Naive thymus-derived CD4-positive, alpha-beta T cell (primary cell): ENCODE measurements at regions of chr3 and their contacts with region 1.

Region 1: GRCh38 chr3:186930641-186931531 is 560 bp downstream of the ST6GAL1 start:
- DNase-seq: peak; percentile 39 to 78 (median 75)
- ATAC-seq: peak; percentile 87
- H3K4me3 ChIP-seq: peak overlapping the region; percentile 79
- H3K4me3 Mint-ChIP-seq: peak overlapping the region; percentile 89 to 100 (median 98)
- H3K27ac ChIP-seq: peak overlapping the region; percentile 74
- H3K27ac Mint-ChIP-seq: peak overlapping the region; percentile 88 to 98 (median 95)
- H3K4me1 ChIP-seq: peaks cover 8 to 20% of the 10 kb centered on the region in 2 donors
- H3K4me1 Mint-ChIP-seq: peaks cover 30 to 47% (median 40%) of the 10 kb centered on the region in 7 donors
- H3K27me3 ChIP-seq: no peaks in the 10 kb centered on the region
- H3K27me3 Mint-ChIP-seq: no peaks in the 10 kb centered on the region

Region 2: GRCh38 chr3:184981071-184981470 is 1949.8 kb before region 1 on chr3:
- CTCF ChIA-PET with region 1: no interaction called
- POLR2A ChIA-PET with region 1: no interaction called
- intact Hi-C with region 1: no loop called
- DNase-seq: no peak
- ATAC-seq: no peak
- H3K4me3 ChIP-seq: no peak overlapping the region
- H3K4me3 Mint-ChIP-seq: no peak overlapping the region
- H3K27ac ChIP-seq: no peak overlapping the region
- H3K27ac Mint-ChIP-seq: no peak overlapping the region
- H3K4me1 ChIP-seq: no peaks in the 10 kb centered on the region
- H3K4me1 Mint-ChIP-seq: peaks cover 0 to 21% (median 10%) of the 10 kb centered on the region in 7 donors
- H3K27me3 ChIP-seq: no peaks in the 10 kb centered on the region
- H3K27me3 Mint-ChIP-seq: no peaks in the 10 kb centered on the region

Region 3: GRCh38 chr3:186342197-186342596 is 588.7 kb before region 1 on chr3:
- CTCF ChIA-PET with region 1: no interaction called
- POLR2A ChIA-PET with region 1: no interaction called
- intact Hi-C with region 1: no loop called
- DNase-seq: no peak
- ATAC-seq: peak; percentile 67
- H3K4me3 ChIP-seq: no peak overlapping the region
- H3K4me3 Mint-ChIP-seq: no peak overlapping the region
- H3K27ac ChIP-seq: no peak overlapping the region
- H3K27ac Mint-ChIP-seq: no peak overlapping the region
- H3K4me1 ChIP-seq: no peaks in the 10 kb centered on the region
- H3K4me1 Mint-ChIP-seq: peaks cover 0 to 13% (median 11%) of the 10 kb centered on the region in 7 donors
- H3K27me3 ChIP-seq: no peaks in the 10 kb centered on the region
- H3K27me3 Mint-ChIP-seq: peaks cover 0 to 15% (median 7%) of the 10 kb centered on the region in 5 donors

Region 4: GRCh38 chr3:186806089-186807055 is 124.5 kb before region 1 on chr3 and contains the start of gene RFC4:
- CTCF ChIA-PET with region 1: interaction called, 3 read pairs
- POLR2A ChIA-PET with region 1: no interaction called
- intact Hi-C with region 1: loop called in 1 of 2 experiments (anchors 1 kb)
- DNase-seq: peak; percentile 66 to 86 (median 82)
- ATAC-seq: peak; percentile 91
- H3K4me3 ChIP-seq: peak within 1 kb of the TSS; percentile 95
- H3K4me3 Mint-ChIP-seq: peak within 1 kb of the TSS; percentile 89 to 97 (median 94)
- H3K27ac ChIP-seq: peak within 1 kb of the TSS; percentile 86
- H3K27ac Mint-ChIP-seq: peak within 1 kb of the TSS; percentile 84 to 97 (median 95)
- H3K4me1 ChIP-seq: peaks cover 17 to 21% of the 10 kb centered on the region in 2 donors
- H3K4me1 Mint-ChIP-seq: peaks cover 5 to 38% (median 18%) of the 10 kb centered on the region in 7 donors
- H3K27me3 ChIP-seq: no peaks in the 10 kb centered on the region
- H3K27me3 Mint-ChIP-seq: no peaks in the 10 kb centered on the region
- total RNA-seq, gene RFC4: 8.7 to 71.6 (median 22.1) TPM

Region 5: GRCh38 chr3:186901135-186901734 is 29.7 kb before region 1 on chr3:
- CTCF ChIA-PET with region 1: interaction called, 3 read pairs
- POLR2A ChIA-PET with region 1: interaction called, 74 read pairs
- intact Hi-C with region 1: loop called in 1 of 2 experiments (anchors 5 kb)
- DNase-seq: peak in 4 of 9 donors; percentile 17 to 33 (median 30)
- ATAC-seq: peak; percentile 36
- H3K4me3 ChIP-seq: no peak overlapping the region
- H3K4me3 Mint-ChIP-seq: peak overlapping the region in 7 of 10 donors; percentile 6 to 61 (median 34)
- H3K27ac ChIP-seq: no peak overlapping the region
- H3K27ac Mint-ChIP-seq: peak overlapping the region; percentile 69 to 91 (median 83)
- H3K4me1 ChIP-seq: peaks cover 8 to 11% of the 10 kb centered on the region in 2 donors
- H3K4me1 Mint-ChIP-seq: peaks cover 5 to 39% (median 25%) of the 10 kb centered on the region in 7 donors
- H3K27me3 ChIP-seq: no peaks in the 10 kb centered on the region
- H3K27me3 Mint-ChIP-seq: no peaks in the 10 kb centered on the region

Region 6: GRCh38 chr3:187006864-187007630 is 76.2 kb after region 1 on chr3:
- CTCF ChIA-PET with region 1: no interaction called
- POLR2A ChIA-PET with region 1: interaction called, 5 read pairs
- intact Hi-C with region 1: loop called (anchors 2 kb)
- DNase-seq: peak in 4 of 9 donors; percentile 43 to 62 (median 52)
- ATAC-seq: peak; percentile 70
- H3K4me3 ChIP-seq: no peak overlapping the region
- H3K4me3 Mint-ChIP-seq: peak overlapping the region in 9 of 10 donors; percentile 10 to 79 (median 60)
- H3K27ac ChIP-seq: no peak overlapping the region
- H3K27ac Mint-ChIP-seq: peak overlapping the region; percentile 5 to 89 (median 61)
- H3K4me1 ChIP-seq: peaks cover 31 to 32% of the 10 kb centered on the region in 2 donors
- H3K4me1 Mint-ChIP-seq: peaks cover 48 to 80% (median 66%) of the 10 kb centered on the region in 7 donors
- H3K27me3 ChIP-seq: no peaks in the 10 kb centered on the region
- H3K27me3 Mint-ChIP-seq: no peaks in the 10 kb centered on the region

Region 7: DNA sequence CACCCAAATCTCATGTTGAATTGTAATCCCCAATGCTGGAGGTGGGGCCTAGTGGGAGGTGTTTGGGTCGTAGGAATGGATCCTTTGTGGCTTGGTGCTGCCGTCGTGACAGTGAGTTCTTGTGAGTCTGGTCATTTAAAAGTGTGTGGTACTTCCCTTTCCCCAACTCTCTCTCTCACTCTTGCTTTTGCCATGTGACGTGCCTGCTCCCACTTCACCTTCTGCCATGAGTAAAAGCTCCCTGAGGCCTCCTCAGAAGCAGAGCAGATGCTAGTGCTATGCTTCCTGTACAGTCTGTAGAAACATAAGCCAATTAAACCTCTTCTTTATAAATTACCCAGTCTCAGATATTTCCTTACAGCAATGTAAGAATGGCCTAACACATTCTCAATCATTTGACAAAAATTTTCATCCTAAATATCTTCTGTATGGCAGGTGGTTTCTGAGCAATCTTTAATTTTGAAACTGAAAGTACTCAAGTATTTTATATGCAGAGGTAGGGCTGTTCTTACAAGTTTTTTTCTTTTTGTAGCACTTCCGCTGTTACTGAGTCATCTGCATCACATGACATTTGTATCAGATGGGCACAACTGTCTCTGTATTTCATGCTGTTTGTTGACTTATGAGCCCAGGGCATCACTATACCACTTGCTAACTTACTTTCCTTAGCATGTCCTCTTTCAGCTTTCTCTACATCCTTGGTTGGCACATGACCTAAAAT is 199.6 kb after region 1 on chr3:
- CTCF ChIA-PET with region 1: no interaction called
- POLR2A ChIA-PET with region 1: interaction called, 5 read pairs
- intact Hi-C with region 1: loop called (anchors 2 kb)
- DNase-seq: peak in 7 of 9 donors; percentile 61 to 86 (median 81)
- ATAC-seq: peak; percentile 99
- H3K4me3 ChIP-seq: no peak overlapping the region
- H3K4me3 Mint-ChIP-seq: peak overlapping the region; percentile 43 to 86 (median 74)
- H3K27ac ChIP-seq: peak overlapping the region; percentile 68
- H3K27ac Mint-ChIP-seq: peak overlapping the region; percentile 95 to 99 (median 97)
- H3K4me1 ChIP-seq: peaks cover 19 to 22% of the 10 kb centered on the region in 2 donors
- H3K4me1 Mint-ChIP-seq: peaks cover 12 to 49% (median 25%) of the 10 kb centered on the region in 7 donors
- H3K27me3 ChIP-seq: no peaks in the 10 kb centered on the region
- H3K27me3 Mint-ChIP-seq: no peaks in the 10 kb centered on the region